Caco-2 (cell line): ENCODE measurements at regions of chr5 and their contacts with region 1.

Region 1: DNA sequence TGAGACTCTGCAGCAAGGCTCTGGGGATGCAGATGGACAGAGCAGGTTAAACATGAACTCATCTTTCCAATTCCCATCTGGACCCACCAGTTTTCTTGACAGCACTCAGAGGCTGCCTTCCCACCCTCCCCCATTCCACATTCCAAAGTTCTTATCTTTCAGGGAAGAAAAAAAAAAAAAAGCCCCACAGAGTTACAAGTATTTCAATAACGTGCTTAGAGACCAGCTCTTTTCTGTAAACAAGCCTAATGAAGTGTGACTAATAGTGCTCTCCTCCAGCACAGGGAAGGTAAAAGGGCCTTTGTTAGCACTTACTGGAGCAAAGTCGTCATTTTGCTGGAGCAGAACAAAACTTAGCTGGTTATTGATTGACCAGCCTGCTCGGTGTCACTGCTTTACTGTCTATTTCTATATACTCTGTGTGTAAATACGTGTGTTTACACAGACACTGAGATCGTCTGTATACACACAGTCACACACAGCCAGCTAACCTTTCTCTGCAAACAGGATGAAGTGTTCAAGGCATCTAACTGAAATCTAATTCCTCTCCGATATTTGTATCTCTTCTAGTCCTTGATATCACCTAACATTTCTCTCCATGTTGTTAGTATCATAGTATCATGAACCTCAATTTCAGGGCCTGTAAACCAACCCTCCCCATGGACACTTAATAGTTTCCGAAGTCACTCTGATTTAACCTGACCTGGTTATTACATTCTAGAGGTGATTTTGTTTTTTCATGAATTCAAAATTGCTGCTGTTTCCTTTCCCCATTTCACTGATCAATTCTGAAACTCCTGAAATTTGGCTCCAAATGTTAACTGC is 84.9 kb downstream of the ZNF608 start:
- DNase-seq: peak; percentile 86 to 91
- H3K4me3 ChIP-seq: no peak overlapping the region
- H3K4me3 Mint-ChIP-seq: peak overlapping the region; percentile 65
- H3K27ac Mint-ChIP-seq: peak overlapping the region; percentile 96
- H3K4me1 ChIP-seq: peaks cover 76% of the 10 kb centered on the region
- H3K4me1 Mint-ChIP-seq: peaks cover 19% of the 10 kb centered on the region
- H3K27me3 ChIP-seq: no peaks in the 10 kb centered on the region
- H3K27me3 Mint-ChIP-seq: no peaks in the 10 kb centered on the region
- CTCF ChIP-seq: no peak

Region 2: DNA sequence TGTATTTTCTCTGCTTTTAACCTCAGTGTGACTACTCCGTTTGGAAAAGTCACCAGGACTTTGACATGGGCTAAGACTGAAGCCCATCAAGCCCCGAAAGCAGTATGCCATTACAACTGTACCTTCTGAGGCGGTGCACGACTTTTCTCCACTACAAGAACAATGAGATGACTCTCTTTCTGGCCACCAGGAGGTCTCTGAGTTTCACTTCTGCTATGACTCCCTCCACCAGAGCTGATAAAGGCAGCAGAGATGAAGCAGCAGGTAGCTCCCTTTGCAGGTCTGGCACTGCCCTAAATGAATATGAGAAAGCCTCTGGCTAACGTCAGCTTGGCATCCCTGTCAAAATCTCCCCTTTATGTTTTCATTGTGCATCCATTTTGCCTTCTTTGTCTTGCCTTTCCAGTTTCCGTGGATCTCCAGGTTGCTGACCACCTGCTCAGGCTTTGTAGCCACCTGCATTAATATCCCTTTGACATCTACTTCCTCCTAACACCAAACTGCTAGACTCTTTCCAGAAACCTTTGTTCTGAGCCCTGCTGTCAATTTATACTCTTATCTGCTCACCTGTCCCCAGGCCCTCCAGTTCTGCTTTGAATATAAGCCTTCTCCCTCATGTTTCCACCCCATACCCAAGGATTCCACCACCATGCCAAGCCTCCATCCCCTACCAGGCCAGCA is 136.8 kb before region 1 on chr5:
- CTCF ChIA-PET with region 1: interaction called, 6 read pairs
- POLR2A ChIA-PET with region 1: interaction called, 5 read pairs
- intact Hi-C with region 1: loop called (anchors 1 kb)
- DNase-seq: no peak
- H3K4me3 ChIP-seq: no peak overlapping the region
- H3K4me3 Mint-ChIP-seq: no peak overlapping the region
- H3K27ac Mint-ChIP-seq: peak overlapping the region; percentile 14
- H3K4me1 ChIP-seq: peaks cover 26% of the 10 kb centered on the region
- H3K4me1 Mint-ChIP-seq: peaks cover 25% of the 10 kb centered on the region
- H3K27me3 ChIP-seq: no peaks in the 10 kb centered on the region
- H3K27me3 Mint-ChIP-seq: no peaks in the 10 kb centered on the region
- CTCF ChIP-seq: no peak

Region 3: GRCh38 chr5:124599028-124599973 is 62.2 kb before region 1 on chr5:
- CTCF ChIA-PET with region 1: no interaction called
- POLR2A ChIA-PET with region 1: interaction called, 4 read pairs
- intact Hi-C with region 1: loop called (anchors 1 kb)
- DNase-seq: peak; percentile 55 to 59
- H3K4me3 ChIP-seq: no peak overlapping the region
- H3K4me3 Mint-ChIP-seq: no peak overlapping the region
- H3K27ac Mint-ChIP-seq: no peak overlapping the region
- H3K4me1 ChIP-seq: peaks cover 29% of the 10 kb centered on the region
- H3K4me1 Mint-ChIP-seq: peaks cover 13% of the 10 kb centered on the region
- H3K27me3 ChIP-seq: no peaks in the 10 kb centered on the region
- H3K27me3 Mint-ChIP-seq: no peaks in the 10 kb centered on the region
- CTCF ChIP-seq: no peak

Region 4: GRCh38 chr5:124677374-124678351 is 16.1 kb after region 1 on chr5:
- CTCF ChIA-PET with region 1: no interaction called
- POLR2A ChIA-PET with region 1: no interaction called
- intact Hi-C with region 1: loop called (anchors 1 kb)
- DNase-seq: no peak
- H3K4me3 ChIP-seq: no peak overlapping the region
- H3K4me3 Mint-ChIP-seq: no peak overlapping the region
- H3K27ac Mint-ChIP-seq: peak overlapping the region; percentile 37
- H3K4me1 ChIP-seq: peaks cover 59% of the 10 kb centered on the region
- H3K4me1 Mint-ChIP-seq: peaks cover 42% of the 10 kb centered on the region
- H3K27me3 ChIP-seq: no peaks in the 10 kb centered on the region
- H3K27me3 Mint-ChIP-seq: no peaks in the 10 kb centered on the region
- CTCF ChIP-seq: no peak

Region 5: GRCh38 chr5:124738681-124739633 is 77.4 kb after region 1 on chr5:
- CTCF ChIA-PET with region 1: interaction called, 3 read pairs
- POLR2A ChIA-PET with region 1: no interaction called
- intact Hi-C with region 1: loop called (anchors 2 kb)
- DNase-seq: peak; percentile 37 to 69
- H3K4me3 ChIP-seq: no peak overlapping the region
- H3K4me3 Mint-ChIP-seq: peak overlapping the region; percentile 51
- H3K27ac Mint-ChIP-seq: peak overlapping the region; percentile 67
- H3K4me1 ChIP-seq: peaks cover 92% of the 10 kb centered on the region
- H3K4me1 Mint-ChIP-seq: peaks cover 47% of the 10 kb centered on the region
- H3K27me3 ChIP-seq: no peaks in the 10 kb centered on the region
- H3K27me3 Mint-ChIP-seq: no peaks in the 10 kb centered on the region
- CTCF ChIP-seq: peak in 1 of 2 experiments; percentile 23

Region 6: GRCh38 chr5:124996764-124997077 is 335.2 kb after region 1 on chr5:
- CTCF ChIA-PET with region 1: no interaction called
- POLR2A ChIA-PET with region 1: no interaction called
- intact Hi-C with region 1: loop called (anchors 1 kb)
- DNase-seq: peak in 1 of 2 experiments; percentile 59
- H3K4me3 ChIP-seq: no peak overlapping the region
- H3K4me3 Mint-ChIP-seq: peak overlapping the region; percentile 52
- H3K27ac Mint-ChIP-seq: peak overlapping the region; percentile 93
- H3K4me1 ChIP-seq: peaks cover 49% of the 10 kb centered on the region
- H3K4me1 Mint-ChIP-seq: peaks cover 39% of the 10 kb centered on the region
- H3K27me3 ChIP-seq: no peaks in the 10 kb centered on the region; the same call in 1 of the 2 replicates
- H3K27me3 Mint-ChIP-seq: no peaks in the 10 kb centered on the region
- CTCF ChIP-seq: no peak